ENCODE measurements at regions of chr19 and their contacts with region 1.

Region 1: GRCh38 chr19:13150187-13150930 is at the starts of genes IER2 and STX10:
- DNase-seq: peak; percentile 90 to 95 (median 91)
- H3K4me3 ChIP-seq: peak within 1 kb of the TSS; percentile 94
- H3K4me3 Mint-ChIP-seq: peak within 1 kb of the TSS; percentile 94 to 100 (median 99)
- H3K27ac ChIP-seq: peak within 1 kb of the TSS; percentile 91
- H3K27ac Mint-ChIP-seq: peak within 1 kb of the TSS; percentile 95 to 99 (median 98)
- H3K4me1 ChIP-seq: peaks cover 12% of the 10 kb centered on the region
- H3K4me1 Mint-ChIP-seq: peaks cover 26 to 42% (median 32%) of the 10 kb centered on the region in 3 donors
- H3K27me3 ChIP-seq: no peaks in the 10 kb centered on the region
- H3K27me3 Mint-ChIP-seq: peaks cover 0 to 20% of the 10 kb centered on the region in 2 donors
- total RNA-seq, gene IER2: 102 to 111 TPM
- total RNA-seq, gene STX10: 60.9 to 63.7 TPM

Region 2: GRCh38 chr19:13117772-13118423 is 32.5 kb before region 1 on chr19 and contains the start of gene NACC1:
- CTCF ChIA-PET with region 1: interaction called, 10 read pairs
- POLR2A ChIA-PET with region 1: interaction called, 22 read pairs
- DNase-seq: peak; percentile 81 to 89 (median 87)
- H3K4me3 ChIP-seq: peak within 1 kb of the TSS; percentile 81
- H3K4me3 Mint-ChIP-seq: peak within 1 kb of the TSS; percentile 90 to 98 (median 92)
- H3K27ac ChIP-seq: peak within 1 kb of the TSS; percentile 68
- H3K27ac Mint-ChIP-seq: peak within 1 kb of the TSS; percentile 78 to 97 (median 95)
- H3K4me1 ChIP-seq: peaks cover 36% of the 10 kb centered on the region
- H3K4me1 Mint-ChIP-seq: peaks cover 55 to 66% (median 64%) of the 10 kb centered on the region in 3 donors
- H3K27me3 ChIP-seq: no peaks in the 10 kb centered on the region
- H3K27me3 Mint-ChIP-seq: peaks cover 0 to 5% of the 10 kb centered on the region in 2 donors
- total RNA-seq, gene NACC1: 89.9 to 111 TPM

Region 3: GRCh38 chr19:13172068-13172896 is 21.9 kb after region 1 on chr19:
- CTCF ChIA-PET with region 1: interaction called, 73 read pairs
- POLR2A ChIA-PET with region 1: interaction called, 129 read pairs
- DNase-seq: peak; percentile 64 to 91 (median 68)
- H3K4me3 ChIP-seq: peak overlapping the region; percentile 51
- H3K4me3 Mint-ChIP-seq: peak overlapping the region; percentile 82 to 92 (median 87)
- H3K27ac ChIP-seq: peak overlapping the region; percentile 39
- H3K27ac Mint-ChIP-seq: peak overlapping the region; percentile 95 to 98 (median 97)
- H3K4me1 ChIP-seq: peaks cover 66% of the 10 kb centered on the region
- H3K4me1 Mint-ChIP-seq: peaks cover 51 to 70% (median 57%) of the 10 kb centered on the region in 3 donors
- H3K27me3 ChIP-seq: no peaks in the 10 kb centered on the region
- H3K27me3 Mint-ChIP-seq: no peaks in the 10 kb centered on the region

Region 4: GRCh38 chr19:13195678-13196077 is 45.3 kb after region 1 on chr19:
- CTCF ChIA-PET with region 1: interaction called, 55 read pairs
- POLR2A ChIA-PET with region 1: interaction called, 10 read pairs
- DNase-seq: peak; percentile 33 to 71 (median 39)
- H3K4me3 ChIP-seq: no peak overlapping the region
- H3K4me3 Mint-ChIP-seq: peak overlapping the region in 2 of 7 donors; percentile 47 to 70
- H3K27ac ChIP-seq: no peak overlapping the region
- H3K27ac Mint-ChIP-seq: peak overlapping the region in 6 of 8 donors; percentile 37 to 87 (median 66)
- H3K4me1 ChIP-seq: peaks cover 35% of the 10 kb centered on the region
- H3K4me1 Mint-ChIP-seq: peaks cover 22 to 26% (median 25%) of the 10 kb centered on the region in 3 donors
- H3K27me3 ChIP-seq: no peaks in the 10 kb centered on the region
- H3K27me3 Mint-ChIP-seq: no peaks in the 10 kb centered on the region

Measured in CD8-positive, alpha-beta memory T cell (primary cell).